Endothelial cell of umbilical vein (primary cell): ENCODE measurements at regions of chr21 and their contacts with region 1.

Region 1: DNA sequence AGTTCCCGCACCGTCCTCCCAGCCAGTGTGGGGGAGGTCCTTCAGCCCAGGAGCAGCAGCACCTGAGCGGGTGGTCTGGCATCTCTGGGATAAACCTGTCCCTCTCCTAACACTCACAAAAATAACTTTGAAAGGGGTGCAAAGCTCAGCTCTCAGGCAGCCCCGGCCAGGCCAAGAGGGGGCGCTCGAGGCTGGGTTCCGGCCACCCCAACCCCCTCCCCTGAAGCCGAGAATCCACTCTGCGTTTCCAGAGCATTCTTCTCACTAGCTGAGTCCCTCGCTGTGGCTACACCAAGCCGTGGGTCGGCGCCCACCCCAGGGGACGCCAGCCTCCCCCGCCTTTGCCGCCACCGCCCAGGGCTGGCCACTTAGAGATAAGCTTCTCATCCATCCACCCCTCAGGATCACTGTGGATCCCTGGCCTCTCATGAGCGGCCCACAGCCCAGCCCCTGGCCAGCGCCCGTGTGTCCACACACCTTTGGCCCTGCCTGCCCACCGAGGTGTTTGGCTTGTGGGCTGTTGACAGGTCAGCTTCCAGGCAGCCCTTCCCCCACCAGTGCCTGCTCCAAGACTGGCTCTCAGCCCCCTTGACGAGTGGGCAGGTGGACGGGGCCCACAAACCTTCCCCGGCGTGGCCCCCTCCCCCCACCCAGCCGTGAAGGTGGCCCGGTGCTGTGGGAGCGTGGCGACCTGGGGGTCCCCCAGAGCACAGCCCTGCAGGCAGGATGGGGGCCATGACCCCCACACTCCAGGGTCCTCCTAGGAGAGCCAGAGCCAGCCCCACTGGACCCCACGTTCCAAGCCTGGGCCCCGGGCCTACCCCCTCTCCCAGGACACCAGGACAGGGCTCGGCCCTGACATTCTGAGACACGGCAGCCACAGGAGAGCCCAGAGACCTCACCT is 1.9 kb downstream of the FTCD start:
- DNase-seq: peak; percentile 47
- H3K4me3 ChIP-seq: peak overlapping the region in 1 of 3 experiments; percentile 2
- H3K27ac ChIP-seq: no peak overlapping the region
- H3K4me1 ChIP-seq: no peaks in the 10 kb centered on the region
- H3K27me3 ChIP-seq: no peaks in the 10 kb centered on the region
- CTCF ChIP-seq: peak; percentile 89 to 91
- POLR2A ChIP-seq: no peak

Region 2: GRCh38 chr21:45747802-45748445 is 405.6 kb before region 1 on chr21:
- CTCF ChIA-PET with region 1: no interaction called
- POLR2A ChIA-PET with region 1: no interaction called
- dilution Hi-C with region 1: no loop called
- intact Hi-C with region 1: no loop called
- DNase-seq: no peak
- H3K4me3 ChIP-seq: no peak overlapping the region
- H3K27ac ChIP-seq: no peak overlapping the region
- H3K4me1 ChIP-seq: no peaks in the 10 kb centered on the region
- H3K27me3 ChIP-seq: peaks cover 0 to under 1% of the 10 kb centered on the region in 2 experiments
- CTCF ChIP-seq: no peak
- POLR2A ChIP-seq: no peak

Region 3: GRCh38 chr21:46171996-46172862 is 18.7 kb after region 1 on chr21:
- CTCF ChIA-PET with region 1: interaction called, 11 read pairs
- POLR2A ChIA-PET with region 1: no interaction called
- dilution Hi-C with region 1: no loop called
- intact Hi-C with region 1: no loop called
- DNase-seq: no peak
- H3K4me3 ChIP-seq: no peak overlapping the region
- H3K27ac ChIP-seq: no peak overlapping the region
- H3K4me1 ChIP-seq: no peaks in the 10 kb centered on the region
- H3K27me3 ChIP-seq: peaks cover 2 to 11% of the 10 kb centered on the region in 2 experiments
- CTCF ChIP-seq: no peak
- POLR2A ChIP-seq: no peak

Region 4: GRCh38 chr21:46184625-46185555 is 31.4 kb after region 1 on chr21:
- CTCF ChIA-PET with region 1: interaction called, 8 read pairs
- POLR2A ChIA-PET with region 1: no interaction called
- dilution Hi-C with region 1: no loop called
- intact Hi-C with region 1: loop called (anchors 5 kb)
- DNase-seq: peak; percentile 95
- H3K4me3 ChIP-seq: peak overlapping the region; percentile 12 to 55 (median 52)
- H3K27ac ChIP-seq: peak overlapping the region; percentile 35
- H3K4me1 ChIP-seq: peaks cover 31% of the 10 kb centered on the region
- H3K27me3 ChIP-seq: no peaks in the 10 kb centered on the region
- CTCF ChIP-seq: no peak
- POLR2A ChIP-seq: peak; percentile 36